Left ventricle myocardium superior (tissue), 1 donor: ENCODE measurements at regions of chr1 and their contacts with region 1.

Region 1: DNA sequence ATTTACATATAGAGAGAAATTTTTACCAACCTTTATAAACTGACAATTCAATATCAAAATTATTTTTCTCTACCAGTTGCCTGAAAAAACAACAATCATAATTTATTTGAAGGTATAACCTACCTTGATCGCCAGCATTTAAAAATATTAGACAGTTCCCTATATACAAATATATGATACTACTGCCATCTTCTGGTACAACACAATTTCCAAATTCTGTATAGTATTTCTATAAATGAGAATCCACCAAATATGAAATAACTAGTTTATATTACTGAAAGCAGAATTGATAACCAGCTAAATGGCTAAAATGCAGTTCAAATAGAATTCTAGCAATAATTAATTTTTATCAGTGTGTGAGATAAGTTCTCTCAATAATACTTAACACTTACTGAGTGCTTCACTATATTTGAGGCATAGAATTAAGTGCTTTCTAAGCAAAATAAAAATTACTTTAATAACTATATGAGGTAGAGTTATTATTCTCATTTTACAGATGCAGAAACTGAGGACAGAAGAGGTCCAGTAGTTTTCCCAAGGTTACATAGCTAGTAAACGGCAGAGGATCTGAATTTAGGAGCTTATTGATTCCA is 75.6 kb downstream of the PIGK start:
- DNase-seq: no peak
- ATAC-seq: no peak

Region 2: DNA sequence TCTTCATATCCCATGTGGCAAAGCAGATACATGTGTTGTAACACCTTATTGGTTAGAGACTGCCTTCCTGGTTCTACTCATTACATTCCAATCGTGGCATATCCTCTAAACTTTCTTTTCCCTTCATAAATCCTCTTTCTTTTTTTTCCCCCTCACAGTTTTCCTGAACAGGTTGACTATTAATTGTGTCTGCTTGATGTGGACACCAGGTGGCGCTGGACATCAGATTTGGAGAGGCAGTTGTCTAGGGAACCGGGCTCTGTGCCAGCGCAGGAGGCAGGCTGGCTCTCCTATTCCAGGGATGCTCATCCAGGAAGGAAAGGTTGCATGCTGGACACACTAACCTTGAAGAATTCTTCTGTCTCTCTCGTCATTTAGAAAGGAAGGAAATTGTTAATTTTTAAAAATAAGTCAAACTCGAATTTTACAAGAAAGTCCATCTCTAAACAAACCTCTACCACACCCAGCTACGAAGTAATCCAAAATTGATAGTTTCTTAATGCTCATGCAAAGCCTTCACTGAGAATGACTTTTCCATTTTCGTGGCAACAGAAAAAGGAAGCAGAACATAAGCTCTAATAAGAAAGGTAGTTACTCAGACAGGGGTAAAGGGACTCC is 1152.0 kb before region 1 on chr1:
- intact Hi-C with region 1: loop called (anchors 10 kb)
- DNase-seq: peak; percentile 91
- ATAC-seq: peak; percentile 60

Region 3: DNA sequence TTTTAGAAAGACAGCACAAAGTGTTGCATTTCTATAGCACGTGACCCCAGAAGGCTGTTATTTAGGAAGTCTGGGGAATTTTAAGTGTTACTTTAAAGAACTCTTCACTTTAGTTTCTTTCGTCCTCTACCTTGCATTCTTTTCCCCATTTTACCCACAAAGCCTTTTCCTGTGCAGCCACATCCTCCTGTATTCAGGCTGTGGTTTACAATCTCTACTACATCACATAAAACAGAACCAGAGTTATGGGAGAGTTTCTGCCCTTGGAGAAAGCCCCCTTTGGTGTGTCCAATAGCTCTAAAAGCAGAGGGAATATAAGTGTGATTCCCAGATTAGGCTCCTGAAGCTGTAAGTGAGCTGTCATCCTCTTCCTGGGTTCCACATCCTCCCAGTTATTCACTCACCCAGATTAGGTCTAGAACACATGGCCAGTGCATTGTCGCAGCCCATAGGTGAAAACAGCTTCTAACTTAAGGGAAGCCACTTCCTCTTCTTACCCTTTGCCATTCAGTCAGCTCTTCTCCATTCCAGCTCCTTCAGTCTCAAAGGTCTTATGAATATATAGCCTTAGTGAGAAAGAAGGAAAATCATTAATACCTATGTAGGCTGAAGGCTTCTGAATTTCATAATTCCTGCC is 95.5 kb before region 1 on chr1:
- intact Hi-C with region 1: no loop called
- DNase-seq: no peak
- ATAC-seq: no peak

Region 4: GRCh38 chr1:77081834-77082233 is 61.8 kb before region 1 on chr1:
- intact Hi-C with region 1: no loop called
- DNase-seq: no peak
- ATAC-seq: peak; percentile 95

Region 5: DNA sequence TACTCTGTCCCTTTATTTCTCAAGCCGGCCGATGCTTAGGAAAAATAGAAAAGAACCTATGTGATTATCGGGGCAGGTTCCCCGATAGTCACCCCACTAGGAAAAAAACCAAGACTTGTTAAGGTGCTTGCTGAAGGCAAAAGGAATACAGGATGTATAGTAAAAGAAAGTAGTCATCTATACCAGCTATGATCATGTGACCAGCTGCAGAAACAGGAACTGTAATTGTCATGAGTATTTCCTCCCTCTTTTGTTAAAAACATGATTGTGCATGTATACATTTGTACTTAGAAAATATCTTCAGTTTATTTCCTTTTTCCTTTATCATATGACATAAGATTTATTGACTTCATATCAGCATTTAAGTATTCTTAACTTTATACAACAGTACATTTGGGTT is 45.1 kb after region 1 on chr1:
- intact Hi-C with region 1: no loop called
- DNase-seq: no peak
- ATAC-seq: no peak

Region 6: DNA sequence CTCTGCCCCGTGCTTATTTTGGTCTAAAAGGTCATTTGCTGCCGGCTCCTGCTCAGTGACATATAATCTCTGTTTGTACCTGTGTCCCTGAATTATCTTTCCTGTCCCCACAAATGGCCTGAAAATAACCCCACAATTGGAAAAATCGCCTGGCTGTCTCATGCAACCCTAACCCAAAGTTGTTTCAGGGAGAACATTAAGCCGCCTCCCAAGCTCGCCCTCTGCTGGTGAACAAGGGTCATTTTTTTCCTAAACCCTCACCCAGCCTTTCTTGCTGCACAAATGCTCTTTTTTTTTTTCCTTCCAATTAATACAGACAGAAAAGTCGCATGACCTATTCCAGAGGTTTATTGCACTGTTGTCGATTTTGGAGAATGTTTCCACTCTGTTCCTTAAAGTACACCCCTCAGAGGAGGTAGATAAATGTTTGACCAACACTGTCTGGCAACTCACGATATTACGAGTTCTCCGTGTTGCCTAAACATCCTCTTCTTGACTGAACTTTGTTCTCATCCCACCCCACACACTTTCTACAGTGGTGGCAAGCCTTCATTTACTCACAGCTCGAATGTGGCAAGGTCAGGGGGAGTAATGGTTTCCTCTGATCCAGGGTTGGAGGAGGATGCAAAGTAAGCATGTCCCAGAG is 390.2 kb after region 1 on chr1:
- intact Hi-C with region 1: loop called (anchors 10 kb)
- DNase-seq: peak; percentile 34
- ATAC-seq: peak; percentile 64